Naive thymus-derived CD4-positive, alpha-beta T cell (primary cell): ENCODE measurements at regions of chr5 and their contacts with region 1.

Region 1: DNA sequence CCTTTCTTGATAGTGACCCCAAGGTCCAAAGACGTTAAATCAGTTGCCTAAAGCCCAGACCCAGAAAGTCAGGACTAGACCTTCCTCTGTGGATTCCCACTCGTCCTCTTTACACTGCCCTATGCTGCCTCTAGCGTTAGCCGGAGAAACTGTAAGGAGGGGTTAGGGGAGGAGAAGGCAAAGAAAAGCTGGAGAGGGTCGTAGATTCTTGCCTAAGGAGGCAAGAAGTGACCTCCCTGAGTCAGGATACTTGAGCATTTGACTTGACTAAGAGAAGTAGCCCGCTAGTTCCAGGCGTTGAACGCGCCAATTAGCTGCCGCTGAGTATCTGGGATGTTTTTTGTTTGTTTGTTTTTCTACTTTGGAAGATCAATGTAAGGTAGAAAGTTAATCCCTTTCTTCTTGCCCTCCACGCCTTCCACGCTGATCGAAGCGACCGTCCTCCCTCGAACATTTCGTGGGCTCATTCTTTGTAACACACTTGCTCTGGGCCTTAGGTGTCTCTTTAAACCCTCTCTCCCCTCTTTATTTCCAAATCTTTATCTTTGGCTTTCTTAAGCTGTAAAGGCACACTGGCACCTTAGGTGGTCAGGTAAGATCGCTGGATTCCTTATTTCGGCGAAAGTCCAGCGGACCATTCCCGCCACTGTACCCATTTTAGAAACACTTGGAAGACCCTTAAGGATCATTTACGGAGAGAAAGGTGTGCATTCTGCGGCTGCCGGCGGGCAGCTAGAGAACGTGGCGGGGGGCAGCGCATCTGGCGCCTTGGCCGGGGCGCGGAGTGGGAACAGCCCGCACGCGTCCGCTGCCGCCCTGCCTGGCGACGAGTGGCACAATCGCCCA is 5.1 kb upstream of the RGMB start:
- DNase-seq: peak in 7 of 9 donors; percentile 23 to 43 (median 27)
- ATAC-seq: peak; percentile 38
- H3K4me3 ChIP-seq: peak overlapping the region; percentile 65
- H3K4me3 Mint-ChIP-seq: peak overlapping the region; percentile 78 to 100 (median 96)
- H3K27ac ChIP-seq: no peak overlapping the region
- H3K27ac Mint-ChIP-seq: peak overlapping the region in 3 of 9 donors; percentile 50 to 60 (median 58)
- H3K4me1 ChIP-seq: peaks cover 19 to 25% of the 10 kb centered on the region in 2 donors
- H3K4me1 Mint-ChIP-seq: peaks cover 22 to 45% (median 38%) of the 10 kb centered on the region in 7 donors
- H3K27me3 ChIP-seq: peaks cover 0 to 6% of the 10 kb centered on the region in 2 donors
- H3K27me3 Mint-ChIP-seq: peaks cover 21 to 81% (median 39%) of the 10 kb centered on the region in 5 donors

Region 2: GRCh38 chr5:97534166-97534565 is 1234.2 kb before region 1 on chr5:
- CTCF ChIA-PET with region 1: interaction called, 3 read pairs
- POLR2A ChIA-PET with region 1: no interaction called
- intact Hi-C with region 1: loop called in 1 of 2 experiments (anchors 5 kb)
- DNase-seq: no peak
- ATAC-seq: peak; percentile 76
- H3K4me3 ChIP-seq: no peak overlapping the region
- H3K4me3 Mint-ChIP-seq: no peak overlapping the region
- H3K27ac ChIP-seq: no peak overlapping the region
- H3K27ac Mint-ChIP-seq: peak overlapping the region in 2 of 9 donors; percentile 5 to 39
- H3K4me1 ChIP-seq: no peaks in the 10 kb centered on the region
- H3K4me1 Mint-ChIP-seq: peaks cover 0 to 17% (median 0%) of the 10 kb centered on the region in 7 donors
- H3K27me3 ChIP-seq: no peaks in the 10 kb centered on the region
- H3K27me3 Mint-ChIP-seq: peaks cover 0 to 4% (median 3%) of the 10 kb centered on the region in 5 donors

Region 3: DNA sequence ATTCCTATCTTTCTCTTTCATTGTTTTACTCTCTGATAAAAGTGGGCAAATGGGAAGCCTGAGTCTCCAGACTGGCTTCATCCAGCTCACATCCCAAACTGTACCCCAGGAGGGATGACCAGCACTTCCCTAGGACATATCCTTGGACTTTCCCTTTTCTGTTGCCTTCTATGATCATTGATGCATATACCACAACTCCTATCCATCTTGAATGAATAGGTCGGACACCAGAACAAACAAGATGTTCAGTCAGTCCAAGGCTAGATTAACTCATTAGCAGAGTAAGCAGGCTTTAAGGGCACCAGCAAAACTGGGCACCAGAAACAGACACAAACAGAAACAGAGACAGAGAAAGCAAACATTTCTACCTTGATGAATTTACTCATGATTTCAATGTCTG is 154.0 kb before region 1 on chr5:
- CTCF ChIA-PET with region 1: no interaction called
- POLR2A ChIA-PET with region 1: no interaction called
- intact Hi-C with region 1: loop called in 1 of 2 experiments (anchors 10 kb)
- DNase-seq: no peak
- ATAC-seq: no peak
- H3K4me3 ChIP-seq: no peak overlapping the region
- H3K4me3 Mint-ChIP-seq: no peak overlapping the region
- H3K27ac ChIP-seq: no peak overlapping the region
- H3K27ac Mint-ChIP-seq: no peak overlapping the region
- H3K4me1 ChIP-seq: no peaks in the 10 kb centered on the region
- H3K4me1 Mint-ChIP-seq: peaks cover 0 to 2% (median 0%) of the 10 kb centered on the region in 7 donors
- H3K27me3 ChIP-seq: no peaks in the 10 kb centered on the region
- H3K27me3 Mint-ChIP-seq: peaks cover 0 to 14% (median 0%) of the 10 kb centered on the region in 5 donors

Region 4: GRCh38 chr5:98664736-98665135 is 103.6 kb before region 1 on chr5:
- CTCF ChIA-PET with region 1: no interaction called
- POLR2A ChIA-PET with region 1: no interaction called
- intact Hi-C with region 1: no loop called
- DNase-seq: no peak
- ATAC-seq: no peak
- H3K4me3 ChIP-seq: no peak overlapping the region
- H3K4me3 Mint-ChIP-seq: no peak overlapping the region
- H3K27ac ChIP-seq: no peak overlapping the region
- H3K27ac Mint-ChIP-seq: no peak overlapping the region
- H3K4me1 ChIP-seq: no peaks in the 10 kb centered on the region
- H3K4me1 Mint-ChIP-seq: no peaks in the 10 kb centered on the region
- H3K27me3 ChIP-seq: no peaks in the 10 kb centered on the region
- H3K27me3 Mint-ChIP-seq: peaks cover 0 to 38% (median 28%) of the 10 kb centered on the region in 5 donors

Region 5: DNA sequence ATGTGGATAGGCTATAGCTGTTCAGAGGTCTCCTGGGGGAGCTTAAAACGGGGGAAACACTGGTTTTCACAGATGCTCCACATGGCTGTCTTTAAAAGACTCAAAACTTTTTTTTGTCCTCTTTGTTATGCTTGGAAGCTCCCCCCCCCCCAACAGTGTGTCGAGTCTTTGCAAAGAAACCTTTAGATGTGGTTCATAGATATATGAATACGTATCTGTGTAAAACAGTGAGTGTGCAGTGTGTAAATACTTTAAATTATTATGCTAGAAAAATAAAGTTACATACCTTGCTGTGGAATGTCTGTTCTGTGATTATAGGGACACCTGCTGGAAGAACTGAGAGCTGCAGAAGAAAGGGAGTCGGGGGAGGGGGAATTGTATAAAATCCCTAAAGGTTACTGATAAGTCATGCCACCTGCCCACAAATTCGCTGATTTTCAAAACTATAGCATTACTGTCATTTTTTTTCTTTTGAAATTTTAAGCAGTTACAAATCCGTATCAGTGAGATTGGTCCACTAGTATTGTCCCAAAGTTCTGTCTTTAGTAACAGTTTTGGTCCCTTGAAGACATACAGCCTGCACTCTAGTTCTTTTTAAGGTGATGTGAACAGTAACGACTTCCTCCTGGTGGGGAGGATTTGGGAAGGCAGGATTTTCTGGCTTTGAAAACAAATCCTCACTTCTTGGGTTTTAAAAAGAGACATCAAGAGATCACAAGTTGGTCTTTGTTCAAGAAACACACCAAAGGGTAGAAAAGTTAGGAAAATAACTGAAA is 28.0 kb after region 1 on chr5:
- CTCF ChIA-PET with region 1: interaction called, 23 read pairs
- POLR2A ChIA-PET with region 1: interaction called, 3 read pairs
- intact Hi-C with region 1: loop called in 1 of 2 experiments (anchors 1 kb)
- DNase-seq: peak in 8 of 9 donors; percentile 28 to 62 (median 55)
- ATAC-seq: peak; percentile 73
- H3K4me3 ChIP-seq: no peak overlapping the region
- H3K4me3 Mint-ChIP-seq: no peak overlapping the region
- H3K27ac ChIP-seq: no peak overlapping the region
- H3K27ac Mint-ChIP-seq: peak overlapping the region in 1 of 9 donors; percentile 44
- H3K4me1 ChIP-seq: no peaks in the 10 kb centered on the region
- H3K4me1 Mint-ChIP-seq: peaks cover 0 to 20% (median 4%) of the 10 kb centered on the region in 7 donors
- H3K27me3 ChIP-seq: no peaks in the 10 kb centered on the region
- H3K27me3 Mint-ChIP-seq: peaks cover 0 to 2% (median 0%) of the 10 kb centered on the region in 5 donors